MCF 10A (cell line): ENCODE measurements at regions of chr1 and their contacts with region 1.

Region 1: DNA sequence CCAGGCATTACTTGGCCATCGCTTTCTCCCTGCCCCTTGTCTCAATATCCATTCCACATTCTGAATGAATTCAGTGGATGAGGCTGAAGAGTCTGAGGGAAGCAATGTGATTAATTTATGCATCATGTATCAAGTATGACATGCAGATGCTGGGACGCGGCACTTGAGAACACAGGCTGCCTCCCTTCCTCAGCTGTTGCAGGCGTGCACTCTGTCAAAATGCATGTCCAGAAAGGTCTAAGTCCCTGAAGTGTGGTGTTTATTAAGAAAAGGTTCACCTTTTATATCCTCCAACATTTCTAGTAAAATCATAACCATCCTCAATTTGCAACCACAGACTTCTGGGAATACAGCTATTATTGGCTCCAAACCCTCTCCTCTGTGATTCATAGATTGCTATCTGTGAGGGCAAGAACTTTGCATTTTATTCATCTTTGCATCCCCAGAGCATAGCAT is 22.6 kb upstream of the RAB3GAP2 start:
- DNase-seq: no peak
- H3K4me3 Mint-ChIP-seq: no peak overlapping the region
- H3K27ac Mint-ChIP-seq: no peak overlapping the region
- H3K4me1 Mint-ChIP-seq: peaks cover 5% of the 10 kb centered on the region
- H3K27me3 Mint-ChIP-seq: no peaks in the 10 kb centered on the region
- CTCF ChIP-seq: no peak

Region 2: GRCh38 chr1:220170836-220171526 is 123.9 kb before region 1 on chr1:
- CTCF ChIA-PET with region 1: no interaction called
- POLR2A ChIA-PET with region 1: no interaction called
- intact Hi-C with region 1: no loop called
- DNase-seq: no peak
- H3K4me3 Mint-ChIP-seq: no peak overlapping the region
- H3K27ac Mint-ChIP-seq: no peak overlapping the region
- H3K4me1 Mint-ChIP-seq: no peaks in the 10 kb centered on the region
- H3K27me3 Mint-ChIP-seq: no peaks in the 10 kb centered on the region
- CTCF ChIP-seq: no peak

Region 3: GRCh38 chr1:220315070-220315839 is 20.4 kb after region 1 on chr1:
- CTCF ChIA-PET with region 1: interaction called, 35 read pairs
- POLR2A ChIA-PET with region 1: no interaction called
- intact Hi-C with region 1: no loop called
- DNase-seq: peak; percentile 62
- H3K4me3 Mint-ChIP-seq: no peak overlapping the region
- H3K27ac Mint-ChIP-seq: no peak overlapping the region
- H3K4me1 Mint-ChIP-seq: peaks cover 5% of the 10 kb centered on the region
- H3K27me3 Mint-ChIP-seq: no peaks in the 10 kb centered on the region
- CTCF ChIP-seq: no peak

Region 4: GRCh38 chr1:220335668-220336067 is 40.8 kb after region 1 on chr1:
- CTCF ChIA-PET with region 1: interaction called, 37 read pairs
- POLR2A ChIA-PET with region 1: interaction called, 71 read pairs
- intact Hi-C with region 1: loop called (anchors 1 kb)
- DNase-seq: peak; percentile 94
- H3K4me3 Mint-ChIP-seq: no peak overlapping the region
- H3K27ac Mint-ChIP-seq: peak overlapping the region; percentile 84
- H3K4me1 Mint-ChIP-seq: peaks cover 32% of the 10 kb centered on the region
- H3K27me3 Mint-ChIP-seq: no peaks in the 10 kb centered on the region
- CTCF ChIP-seq: no peak

Region 5: DNA sequence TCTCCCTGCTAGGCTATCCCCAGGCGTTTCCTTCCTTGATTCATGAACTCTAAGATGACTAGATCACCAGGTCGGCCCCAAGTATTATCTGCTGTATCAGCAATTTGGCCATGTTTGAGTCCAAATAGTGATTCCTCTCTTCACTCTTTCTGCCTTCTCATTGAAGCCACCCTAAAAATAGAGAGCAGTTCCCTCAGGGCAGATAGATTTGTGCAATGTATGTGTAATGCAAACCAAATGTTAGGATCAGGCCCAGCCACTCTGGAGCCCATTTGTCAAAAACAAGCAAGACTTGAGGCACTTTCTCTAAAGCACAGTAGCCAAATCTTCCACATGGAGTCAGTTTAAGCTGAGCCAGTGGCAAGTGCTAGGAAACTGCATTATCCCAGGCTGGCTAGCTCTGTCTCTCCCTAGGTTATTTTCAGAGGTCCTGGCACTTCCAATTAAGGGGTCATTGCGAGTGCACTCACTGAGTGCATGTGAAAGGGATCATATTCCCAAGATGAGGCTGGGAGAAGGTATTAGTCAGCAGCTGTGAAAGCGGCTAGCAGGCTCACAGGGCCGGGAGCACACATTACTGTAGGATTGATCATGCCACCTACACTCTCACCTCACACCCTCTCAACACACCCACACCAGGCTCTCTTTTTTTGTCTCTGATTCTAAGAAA is 75.3 kb after region 1 on chr1:
- CTCF ChIA-PET with region 1: interaction called, 45 read pairs
- POLR2A ChIA-PET with region 1: interaction called, 3 read pairs
- intact Hi-C with region 1: loop called (anchors 1 kb)
- DNase-seq: peak; percentile 98
- H3K4me3 Mint-ChIP-seq: peak overlapping the region; percentile 6
- H3K27ac Mint-ChIP-seq: peak overlapping the region; percentile 65
- H3K4me1 Mint-ChIP-seq: peaks cover 28% of the 10 kb centered on the region
- H3K27me3 Mint-ChIP-seq: no peaks in the 10 kb centered on the region
- CTCF ChIP-seq: no peak

Region 6: DNA sequence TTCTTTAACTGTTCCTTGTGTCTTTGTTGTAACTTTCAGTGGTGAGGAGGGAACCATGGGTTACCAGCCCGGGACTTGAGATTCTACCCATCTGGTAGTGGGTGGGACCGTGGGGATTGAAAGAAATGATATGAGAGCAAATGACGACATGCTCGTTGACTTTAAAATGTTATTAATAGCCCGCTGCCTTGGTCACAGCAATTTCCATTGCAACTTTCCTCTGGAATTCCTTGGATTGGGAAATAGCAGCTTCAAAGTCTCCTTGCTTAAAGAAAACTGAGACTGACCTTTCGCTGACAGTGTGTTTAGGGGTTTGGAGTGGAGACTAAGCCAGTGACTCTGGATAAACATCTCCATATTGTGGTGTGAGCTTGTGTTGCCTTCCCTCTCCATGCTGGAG is 188.8 kb after region 1 on chr1:
- CTCF ChIA-PET with region 1: interaction called, 48 read pairs
- POLR2A ChIA-PET with region 1: interaction called, 4 read pairs
- intact Hi-C with region 1: loop called (anchors 1 kb)
- DNase-seq: no peak
- H3K4me3 Mint-ChIP-seq: no peak overlapping the region
- H3K27ac Mint-ChIP-seq: no peak overlapping the region
- H3K4me1 Mint-ChIP-seq: peaks cover 4% of the 10 kb centered on the region
- H3K27me3 Mint-ChIP-seq: no peaks in the 10 kb centered on the region
- CTCF ChIP-seq: no peak

Region 7: DNA sequence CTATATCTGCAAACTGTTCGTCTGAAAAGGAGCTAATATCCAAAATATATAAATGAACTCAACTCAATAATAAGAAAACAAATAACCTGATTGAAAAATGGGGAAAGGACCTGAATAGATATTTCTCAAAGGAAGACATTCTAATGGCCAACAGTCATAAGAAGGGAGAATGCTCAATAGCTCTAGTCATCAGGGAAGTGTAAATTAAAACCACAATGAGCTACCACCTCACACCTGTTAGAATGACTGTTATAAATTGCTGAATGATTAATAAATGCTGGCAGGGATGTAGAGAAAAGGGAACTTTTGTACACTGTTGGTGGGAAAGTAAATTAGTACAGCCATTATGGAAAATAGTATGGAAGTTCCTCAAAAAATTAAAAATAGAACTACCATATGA is 374.1 kb after region 1 on chr1:
- CTCF ChIA-PET with region 1: interaction called, 10 read pairs
- POLR2A ChIA-PET with region 1: no interaction called
- intact Hi-C with region 1: no loop called
- DNase-seq: no peak
- H3K4me3 Mint-ChIP-seq: no peak overlapping the region
- H3K27ac Mint-ChIP-seq: no peak overlapping the region
- H3K4me1 Mint-ChIP-seq: no peaks in the 10 kb centered on the region
- H3K27me3 Mint-ChIP-seq: no peaks in the 10 kb centered on the region
- CTCF ChIP-seq: no peak